Right cardiac atrium (tissue), 5 donors: ENCODE measurements at regions of chr15 and their contacts with region 1.

Region 1: DNA sequence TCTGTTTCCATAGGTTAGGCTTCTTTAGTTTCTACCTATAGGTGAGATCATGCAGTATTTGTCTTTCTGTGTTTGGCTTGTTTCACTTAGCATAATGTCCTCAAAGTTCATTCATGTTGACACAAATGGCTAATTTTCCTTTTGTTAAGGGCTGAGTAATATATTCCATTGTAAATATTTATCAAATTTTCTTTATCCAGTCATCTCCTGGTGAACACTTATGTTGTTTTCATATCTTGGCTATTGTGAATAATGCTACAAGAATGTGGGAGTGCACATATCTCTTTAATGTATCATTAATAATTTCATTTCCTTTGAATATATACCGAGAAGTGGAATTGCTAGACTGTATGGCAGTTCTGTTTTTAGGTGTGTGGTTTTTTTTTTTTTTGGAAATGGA is 251.0 kb upstream of the SEMA6D start:
- DNase-seq: no peak
- ATAC-seq: no peak
- H3K4me3 ChIP-seq: no peak overlapping the region
- H3K27ac ChIP-seq: no peak overlapping the region
- H3K4me1 ChIP-seq: no peaks in the 10 kb centered on the region
- H3K27me3 ChIP-seq: no peaks in the 10 kb centered on the region

Region 2: DNA sequence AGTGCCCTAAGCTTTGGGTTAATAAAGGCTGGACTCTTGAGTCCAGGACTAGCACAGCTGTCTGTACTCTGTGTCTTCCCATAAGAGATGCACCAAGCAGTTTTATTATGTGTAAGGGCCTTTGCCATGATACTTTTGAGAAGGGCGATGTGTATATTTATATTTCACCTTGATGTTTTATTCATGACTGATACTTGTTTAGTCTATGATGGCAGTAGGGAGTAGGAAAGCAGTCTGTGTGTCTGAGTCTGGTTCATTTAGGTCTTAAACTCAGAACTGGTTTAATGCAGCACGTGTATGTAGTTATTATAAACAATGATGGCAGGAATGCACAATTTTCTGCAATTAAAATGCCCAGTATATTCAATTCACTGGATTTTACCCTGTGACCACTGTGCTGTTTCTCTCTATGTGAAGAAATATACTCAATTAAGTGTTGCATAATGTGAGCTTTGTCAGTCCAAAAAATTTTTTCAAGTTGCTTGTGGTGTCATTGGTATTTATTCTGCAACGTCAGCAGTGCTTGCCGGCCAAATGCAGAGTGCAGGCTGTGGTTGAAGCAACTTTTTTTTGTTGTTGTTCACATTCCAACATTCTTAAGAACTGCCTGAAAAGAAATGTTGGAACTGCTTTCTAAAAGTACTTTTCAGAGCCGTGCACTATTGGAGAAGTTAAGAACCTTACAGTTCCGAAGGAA is 172.7 kb before region 1 on chr15:
- intact Hi-C with region 1: no loop called
- DNase-seq: peak; percentile 71 to 91 (median 84)
- ATAC-seq: peak; percentile 80 to 96
- H3K4me3 ChIP-seq: no peak overlapping the region
- H3K27ac ChIP-seq: no peak overlapping the region
- H3K4me1 ChIP-seq: peaks cover 4% of the 10 kb centered on the region
- H3K27me3 ChIP-seq: no peaks in the 10 kb centered on the region

Region 3: DNA sequence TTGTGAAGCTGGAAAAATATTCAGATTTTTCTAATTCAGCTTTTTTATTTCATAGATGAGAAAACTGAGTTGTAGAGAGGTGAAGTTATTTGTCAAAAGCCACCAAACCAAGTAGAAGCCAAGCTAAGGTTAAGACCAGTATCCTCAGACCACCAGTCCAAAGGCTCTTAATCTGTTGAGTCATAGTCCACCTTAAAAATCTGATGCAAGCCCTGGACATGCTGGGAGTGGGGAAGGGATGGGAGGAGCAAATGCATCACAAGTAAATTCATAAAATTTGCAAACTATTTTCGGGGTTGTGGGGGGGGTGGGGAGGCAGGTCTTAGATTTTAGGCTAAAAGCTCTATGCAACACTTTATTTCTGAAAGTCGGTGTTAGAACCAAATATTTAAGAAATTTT is 56.8 kb before region 1 on chr15:
- intact Hi-C with region 1: loop called in 1 of 4 experiments (anchors 10 kb)
- DNase-seq: no peak
- ATAC-seq: no peak
- H3K4me3 ChIP-seq: no peak overlapping the region
- H3K27ac ChIP-seq: no peak overlapping the region
- H3K4me1 ChIP-seq: peaks cover 1% of the 10 kb centered on the region
- H3K27me3 ChIP-seq: no peaks in the 10 kb centered on the region